Breast epithelium (tissue), 4 donors: ENCODE measurements at regions of chr18 and their contacts with region 1.

Region 1: DNA sequence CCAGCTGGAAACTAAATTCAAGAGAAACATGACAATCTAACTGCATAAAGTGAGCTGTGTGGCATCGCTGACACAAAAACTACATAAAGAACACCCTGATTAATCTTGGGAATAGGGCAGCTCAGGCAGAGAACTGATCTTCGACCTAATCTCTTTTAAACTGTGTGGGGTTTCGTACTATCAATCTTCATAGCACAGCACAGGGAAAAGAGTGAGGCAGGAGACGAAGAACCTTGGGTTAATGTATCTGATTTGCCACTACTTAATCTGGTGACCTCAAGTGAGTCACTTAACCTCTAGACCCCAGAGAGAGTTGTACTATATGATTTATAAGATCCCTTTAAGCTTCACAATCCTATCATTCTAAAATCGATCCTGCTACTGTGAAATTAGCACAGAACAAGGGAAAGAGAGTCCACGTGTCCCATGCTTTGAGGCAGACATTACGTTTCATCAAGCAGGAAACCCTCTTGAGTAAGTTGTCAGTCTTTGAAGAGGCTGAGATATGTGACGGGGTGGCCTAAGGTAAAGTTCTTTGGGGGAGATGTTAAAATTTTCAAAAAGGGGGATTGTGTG is 519.7 kb downstream of the SOCS6 start:
- DNase-seq: no peak
- H3K4me3 ChIP-seq: no peak overlapping the region
- H3K27ac ChIP-seq: no peak overlapping the region
- H3K4me1 ChIP-seq: no peaks in the 10 kb centered on the region
- H3K27me3 ChIP-seq: no peaks in the 10 kb centered on the region
- CTCF ChIP-seq: no peak
- POLR2A ChIP-seq: no peak

Region 2: DNA sequence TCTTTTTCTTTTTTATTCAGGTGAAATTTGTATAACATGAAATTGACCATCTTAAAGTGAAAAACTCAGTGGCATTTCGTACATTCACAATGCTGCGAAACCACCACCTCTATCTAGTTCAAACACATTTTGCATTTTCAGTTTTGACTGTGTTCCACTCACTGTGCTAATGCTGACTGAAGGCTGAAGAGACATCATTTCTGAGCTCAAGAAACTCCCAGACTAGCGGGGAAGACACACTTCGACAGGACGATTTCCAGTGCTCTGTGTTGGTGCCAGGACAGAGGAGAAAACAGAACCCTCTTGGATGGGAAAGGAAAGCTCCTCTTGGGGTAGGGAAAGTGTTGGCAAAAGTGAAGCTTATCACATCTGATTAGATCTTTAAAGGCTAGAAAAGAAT is 1779.8 kb after region 1 on chr18:
- intact Hi-C with region 1: loop called (anchors 5 kb)
- DNase-seq: no peak
- H3K4me3 ChIP-seq: no peak overlapping the region
- H3K27ac ChIP-seq: no peak overlapping the region
- H3K4me1 ChIP-seq: no peaks in the 10 kb centered on the region
- H3K27me3 ChIP-seq: no peaks in the 10 kb centered on the region
- CTCF ChIP-seq: no peak
- POLR2A ChIP-seq: no peak